GM10248 (cell line): ENCODE measurements at regions of chr7 and their contacts with region 1.

Region 1: GRCh38 chr7:32204361-32205018 is 134.3 kb upstream of the PDE1C start:
- DNase-seq: peak; percentile 23
- CTCF ChIP-seq: peak; percentile 66

Region 2: DNA sequence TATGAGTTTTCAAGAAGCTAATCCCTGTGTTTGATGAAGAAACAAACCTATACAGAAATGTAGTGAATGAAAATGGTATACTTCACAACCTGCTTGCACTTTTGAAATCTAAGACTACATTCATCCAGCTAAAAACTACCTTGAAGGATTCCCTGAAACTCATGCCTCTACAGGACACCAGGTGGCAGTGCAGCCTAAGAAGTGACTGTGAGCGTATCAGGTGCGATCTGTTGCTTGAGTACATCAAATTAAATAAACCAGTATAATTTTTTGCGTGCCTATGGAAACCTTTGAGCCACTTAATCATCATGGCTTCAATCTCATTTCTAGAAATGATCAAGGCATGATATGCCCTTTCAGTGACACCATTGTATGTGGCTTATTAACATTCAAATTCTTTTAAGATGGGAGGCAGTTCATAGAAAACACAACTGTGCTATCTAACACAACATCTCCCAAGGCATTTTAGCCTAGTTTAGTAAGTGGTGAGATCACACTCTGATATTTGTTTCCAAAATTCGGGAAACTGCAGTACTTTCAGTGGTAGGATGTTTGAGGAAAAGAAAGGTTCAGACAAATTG is 460.1 kb before region 1 on chr7:
- CTCF ChIA-PET with region 1: interaction called, 59 read pairs
- POLR2A ChIA-PET with region 1: no interaction called
- DNase-seq: peak; percentile 38
- CTCF ChIP-seq: peak; percentile 73

Region 3: GRCh38 chr7:32257621-32258020 is 53.1 kb after region 1 on chr7:
- CTCF ChIA-PET with region 1: interaction called, 10 read pairs
- POLR2A ChIA-PET with region 1: no interaction called
- DNase-seq: no peak
- CTCF ChIP-seq: no peak

Region 4: GRCh38 chr7:32357535-32358277 is 153.2 kb after region 1 on chr7:
- CTCF ChIA-PET with region 1: interaction called, 11 read pairs
- POLR2A ChIA-PET with region 1: no interaction called
- DNase-seq: no peak
- CTCF ChIP-seq: no peak